Right lobe of liver (tissue), 6 donors: ENCODE measurements at regions of chr5 and their contacts with region 1.

Region 1: DNA sequence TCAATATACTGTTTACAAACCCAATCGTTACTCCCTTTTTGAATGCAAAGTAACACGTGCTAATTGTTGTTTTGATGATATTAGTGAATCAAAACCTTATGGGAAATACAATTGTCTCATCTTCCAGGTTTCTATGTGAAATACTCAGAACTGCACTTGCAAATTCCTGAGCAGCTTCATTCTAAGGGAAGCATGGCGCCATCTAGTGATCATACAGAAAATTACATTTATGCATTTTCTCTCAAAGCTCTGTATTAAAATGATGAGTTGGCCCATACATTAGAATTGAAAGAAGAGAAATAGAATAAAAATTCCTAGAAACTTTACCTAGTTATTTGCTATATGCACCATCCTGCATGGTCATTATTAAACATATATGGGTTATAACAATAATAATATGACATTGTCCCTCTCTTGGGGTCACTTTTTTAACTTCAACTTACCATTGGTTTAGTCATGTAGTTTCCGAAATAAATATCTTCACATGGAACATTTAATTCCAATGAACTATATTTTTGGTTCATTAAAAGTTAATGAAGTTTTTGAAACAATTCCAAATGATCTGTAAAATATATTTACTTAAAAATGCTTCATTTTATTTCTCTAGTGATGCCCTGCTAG is 220.0 kb downstream of the PDE4D start:
- DNase-seq: no peak
- ATAC-seq: peak; percentile 61 to 83 (median 74)
- H3K4me3 ChIP-seq: no peak overlapping the region
- H3K27ac ChIP-seq: no peak overlapping the region
- H3K4me1 ChIP-seq: no peaks in the 10 kb centered on the region
- H3K27me3 ChIP-seq: no peaks in the 10 kb centered on the region
- CTCF ChIP-seq: peak; percentile 82 to 90 (median 85)
- POLR2A ChIP-seq: no peak

Region 2: GRCh38 chr5:59506285-59506877 is 167.2 kb before region 1 on chr5:
- intact Hi-C with region 1: loop called in 1 of 2 experiments (anchors 10 kb)
- DNase-seq: no peak
- ATAC-seq: peak in 1 of 4 donors; percentile 42
- H3K4me3 ChIP-seq: no peak overlapping the region
- H3K27ac ChIP-seq: no peak overlapping the region
- H3K4me1 ChIP-seq: no peaks in the 10 kb centered on the region
- H3K27me3 ChIP-seq: no peaks in the 10 kb centered on the region
- CTCF ChIP-seq: peak; percentile 54 to 63 (median 56)
- POLR2A ChIP-seq: no peak